ENCODE measurements at regions of chr10 and their contacts with region 1.

Region 1: GRCh38 chr10:117167789-117168674 is 29.3 kb upstream of the KCNK18 start:
- DNase-seq: peak; percentile 17 to 85 (median 57)
- H3K4me3 ChIP-seq: peak overlapping the region in 56 of 59 donors; percentile 1 to 63 (median 44)
- H3K27ac ChIP-seq: peak overlapping the region in 10 of 59 donors; percentile 1 to 58 (median 32)
- H3K27me3 ChIP-seq: peaks cover 0 to 94% (median 70%) of the 10 kb centered on the region in 45 donors
- CTCF ChIP-seq: peak; percentile 56 to 98 (median 90)

Region 2: DNA sequence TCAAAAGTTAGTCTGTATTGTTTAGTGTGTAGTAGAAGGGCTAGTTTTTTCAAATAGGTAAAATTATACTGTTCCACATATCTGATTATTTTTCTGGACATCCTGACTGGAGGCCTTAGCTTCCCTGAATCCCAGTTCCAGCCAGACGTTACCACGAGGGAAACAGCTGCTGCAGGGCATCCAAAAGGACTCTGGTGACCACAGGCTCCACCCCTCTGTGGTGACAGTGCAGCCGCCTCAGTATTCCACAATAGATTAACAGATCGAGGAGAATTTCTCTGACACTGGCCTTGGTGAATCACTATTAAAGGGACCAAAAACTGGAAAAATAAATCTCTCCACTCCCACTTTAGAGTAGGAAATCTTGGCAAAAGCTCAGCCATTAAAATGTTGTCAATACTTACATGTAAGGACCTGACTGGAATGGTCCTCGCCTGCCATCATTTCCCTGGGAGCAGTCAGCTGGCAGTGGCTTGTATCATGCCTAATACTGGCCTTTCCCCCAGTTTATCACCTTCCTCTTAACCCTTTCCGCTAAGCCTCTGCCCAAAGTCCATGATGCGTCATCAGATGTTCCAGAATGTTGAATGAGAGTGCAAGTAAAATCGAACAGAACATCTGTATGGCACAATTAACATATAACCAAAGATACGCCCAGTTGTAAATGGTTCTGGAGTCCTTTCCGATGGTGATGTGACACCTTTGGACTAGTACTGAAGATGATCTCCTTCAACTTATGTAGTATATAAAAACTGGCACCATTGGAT is 287.1 kb before region 1 on chr10:
- intact Hi-C with region 1: loop called in 1 of 2 experiments (anchors 5 kb)
- DNase-seq: peak in 4 of 10 donors; percentile 37 to 55 (median 52)
- H3K4me3 ChIP-seq: no peak overlapping the region
- H3K27ac ChIP-seq: peak overlapping the region in 29 of 59 donors; percentile 3 to 75 (median 46)
- H3K27me3 ChIP-seq: no peaks in the 10 kb centered on the region
- CTCF ChIP-seq: no peak

Region 3: GRCh38 chr10:117137031-117137910 is 30.8 kb before region 1 on chr10:
- intact Hi-C with region 1: loop called in 1 of 2 experiments (anchors 2 kb)
- DNase-seq: peak in 1 of 10 donors; percentile 50
- H3K4me3 ChIP-seq: peak overlapping the region; percentile 23 to 77 (median 55)
- H3K27ac ChIP-seq: peak overlapping the region in 51 of 59 donors; percentile 6 to 89 (median 66)
- H3K27me3 ChIP-seq: peaks cover 12 to 98% (median 92%) of the 10 kb centered on the region in 45 donors
- CTCF ChIP-seq: no peak

Measured in dorsolateral prefrontal cortex (tissue), 120 donors.